ENCODE measurements at regions of chr9 and their contacts with region 1.

Region 1: GRCh38 chr9:124852829-124853531 is at the start of gene WDR38:
- DNase-seq: peak; percentile 83
- H3K4me3 Mint-ChIP-seq: peak within 1 kb of the TSS; percentile 64
- H3K27ac Mint-ChIP-seq: no peak within 1 kb of the TSS
- H3K4me1 Mint-ChIP-seq: peaks cover 20% of the 10 kb centered on the region
- H3K27me3 Mint-ChIP-seq: peaks cover 3% of the 10 kb centered on the region
- total RNA-seq, gene WDR38: not detected

Region 2: GRCh38 chr9:124453586-124454191 is 399.3 kb before region 1 on chr9:
- CTCF ChIA-PET with region 1: no interaction called
- intact Hi-C with region 1: no loop called
- DNase-seq: no peak
- H3K4me3 Mint-ChIP-seq: no peak overlapping the region
- H3K27ac Mint-ChIP-seq: no peak overlapping the region
- H3K4me1 Mint-ChIP-seq: peaks cover 2% of the 10 kb centered on the region
- H3K27me3 Mint-ChIP-seq: peaks cover 34% of the 10 kb centered on the region

Region 3: DNA sequence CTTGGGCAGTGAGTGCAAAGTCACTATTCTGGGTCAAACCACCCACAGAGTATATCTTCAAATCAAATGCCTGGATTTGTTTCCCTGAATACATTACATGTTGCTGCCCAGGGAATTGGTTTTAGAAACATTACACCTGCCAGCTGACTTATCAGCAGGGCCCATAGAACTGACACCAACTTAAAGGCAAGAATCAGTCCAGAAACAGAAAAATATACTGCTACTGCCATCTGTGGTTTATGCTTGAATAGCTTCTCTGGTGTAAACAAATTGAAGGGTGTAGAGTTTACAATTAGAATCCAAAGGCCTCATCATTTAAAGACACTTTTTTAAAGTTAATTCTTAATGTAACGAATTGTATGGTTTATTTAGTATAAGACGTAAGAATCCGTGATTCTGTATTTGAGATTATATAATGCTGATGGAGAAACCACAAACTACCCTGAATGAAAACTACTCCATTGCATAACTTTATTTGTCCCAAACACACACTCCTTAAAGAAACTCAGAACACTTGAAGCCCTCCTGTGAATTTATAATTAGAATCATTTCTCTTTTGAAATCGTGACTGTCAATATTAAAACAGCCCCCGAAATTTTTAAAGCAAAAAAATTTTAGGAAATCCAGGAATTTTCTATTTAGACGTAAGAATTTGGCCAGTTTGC is 88.1 kb before region 1 on chr9:
- CTCF ChIA-PET with region 1: interaction called, 315 read pairs
- intact Hi-C with region 1: no loop called
- DNase-seq: no peak
- H3K4me3 Mint-ChIP-seq: no peak overlapping the region
- H3K27ac Mint-ChIP-seq: no peak overlapping the region
- H3K4me1 Mint-ChIP-seq: peaks cover 9% of the 10 kb centered on the region
- H3K27me3 Mint-ChIP-seq: peaks cover 76% of the 10 kb centered on the region

Region 4: GRCh38 chr9:124839612-124840299 is 13.2 kb before region 1 on chr9:
- CTCF ChIA-PET with region 1: interaction called, 37 read pairs
- intact Hi-C with region 1: no loop called
- DNase-seq: no peak
- H3K4me3 Mint-ChIP-seq: no peak overlapping the region
- H3K27ac Mint-ChIP-seq: no peak overlapping the region
- H3K4me1 Mint-ChIP-seq: no peaks in the 10 kb centered on the region
- H3K27me3 Mint-ChIP-seq: peaks cover 25% of the 10 kb centered on the region

Region 5: DNA sequence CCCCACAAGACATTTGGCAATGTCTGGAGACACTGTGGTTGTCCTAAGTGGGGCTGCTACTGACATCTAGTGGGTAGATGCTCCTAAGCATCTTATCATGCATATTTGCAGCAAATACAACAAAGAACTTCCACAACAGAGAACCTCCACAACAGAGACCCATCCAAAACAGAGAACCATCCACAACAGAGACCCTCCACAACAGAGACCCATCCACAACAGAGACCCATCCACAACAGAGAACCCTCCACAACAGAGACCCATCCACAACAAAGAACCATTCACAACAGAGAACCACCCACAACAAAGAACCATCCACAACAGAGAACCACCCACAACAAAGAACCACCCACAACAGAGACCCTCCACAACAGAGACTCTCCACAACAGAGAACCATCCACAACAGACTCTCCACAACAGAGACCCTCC is 41.8 kb after region 1 on chr9:
- CTCF ChIA-PET with region 1: interaction called, 9 read pairs
- intact Hi-C with region 1: loop called (anchors 1 kb)
- DNase-seq: peak; percentile 65
- H3K4me3 Mint-ChIP-seq: no peak overlapping the region
- H3K27ac Mint-ChIP-seq: no peak overlapping the region
- H3K4me1 Mint-ChIP-seq: peaks cover 11% of the 10 kb centered on the region
- H3K27me3 Mint-ChIP-seq: no peaks in the 10 kb centered on the region

Region 6: DNA sequence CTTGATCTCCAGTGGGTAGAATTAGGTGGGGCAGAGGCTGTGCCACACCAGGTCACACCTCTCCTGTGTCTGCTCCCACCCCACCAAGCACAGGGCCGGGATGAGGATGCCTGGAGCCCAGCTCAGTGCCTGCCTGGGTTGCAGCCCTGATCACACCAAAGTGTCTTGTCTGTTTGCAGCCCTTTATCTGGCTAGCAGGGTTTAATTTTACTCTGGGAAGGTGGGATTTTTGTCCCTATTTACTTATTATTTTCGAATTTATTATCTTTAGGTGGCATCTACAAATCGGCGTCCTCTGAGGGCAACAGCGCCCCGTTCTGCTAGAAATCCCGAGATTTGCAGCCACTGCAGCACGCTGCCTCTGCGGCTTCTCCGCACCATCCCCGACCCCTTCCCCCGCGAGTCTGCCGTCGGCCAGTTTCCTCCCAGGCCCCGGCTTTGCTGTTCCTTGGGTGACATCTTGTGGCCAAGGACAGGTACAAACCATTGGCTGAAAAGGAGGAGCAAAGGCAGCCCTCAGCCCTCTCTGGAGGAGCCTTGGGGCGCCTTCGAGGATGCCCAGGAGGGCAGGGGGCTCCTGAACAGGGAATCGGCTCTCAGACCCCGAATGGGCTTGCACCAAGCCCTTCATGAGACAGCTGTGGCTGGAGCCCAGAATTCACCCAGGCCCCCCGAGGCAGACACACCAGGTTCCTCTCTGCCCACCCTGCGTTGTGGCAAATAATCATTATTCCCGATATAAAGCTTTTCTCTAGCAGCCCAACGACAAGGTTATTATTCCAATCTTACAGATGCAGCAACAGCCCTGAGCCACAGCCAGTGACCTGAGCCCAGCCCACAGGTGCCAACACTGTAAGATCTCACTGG is 521.7 kb after region 1 on chr9:
- CTCF ChIA-PET with region 1: interaction called, 5 read pairs
- intact Hi-C with region 1: loop called (anchors 1 kb)
- DNase-seq: peak; percentile 80
- H3K4me3 Mint-ChIP-seq: peak overlapping the region; percentile 58
- H3K27ac Mint-ChIP-seq: no peak overlapping the region
- H3K4me1 Mint-ChIP-seq: peaks cover 7% of the 10 kb centered on the region
- H3K27me3 Mint-ChIP-seq: peaks cover 3% of the 10 kb centered on the region

Measured in activated naive CD4-positive, alpha-beta T cell treated with anti-CD3 and anti-CD28 coated beads for 36 hours (primary cell).